MCF 10A (cell line): ENCODE measurements at regions of chr16 and their contacts with region 1.

Region 1: DNA sequence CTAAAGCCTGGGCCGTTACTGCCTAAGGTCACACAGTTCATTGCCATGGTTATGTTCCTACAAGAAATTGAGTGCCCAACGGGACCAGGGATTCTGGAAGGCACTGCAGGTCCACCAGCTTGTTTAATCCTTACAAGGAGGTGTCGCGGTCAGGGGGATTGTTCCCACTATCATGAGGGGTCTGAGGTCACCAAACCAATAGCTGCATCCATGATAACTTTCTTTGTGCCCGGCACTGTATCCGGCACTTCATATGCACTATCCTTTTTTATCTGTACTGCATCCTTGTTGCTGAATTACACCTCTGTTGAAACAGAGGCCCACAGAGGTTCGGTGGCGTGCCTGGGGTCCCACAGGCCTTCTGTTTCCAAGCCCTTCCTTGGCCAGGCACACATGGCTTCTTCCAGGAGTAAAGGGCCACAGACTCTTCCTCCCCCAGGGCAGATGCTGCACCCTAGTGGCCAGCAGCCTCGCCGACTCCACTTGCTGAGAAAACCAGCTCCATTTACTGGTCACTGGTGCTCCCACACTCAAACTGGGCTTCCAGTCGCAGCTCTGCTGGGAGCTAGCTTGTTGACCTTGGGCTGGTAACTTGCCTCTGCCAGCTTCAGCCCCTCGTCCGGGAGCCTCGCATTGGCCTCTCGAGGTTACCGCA is 82.0 kb upstream of the PLCG2 start:
- DNase-seq: peak; percentile 52
- H3K4me3 Mint-ChIP-seq: no peak overlapping the region
- H3K27ac Mint-ChIP-seq: no peak overlapping the region
- H3K4me1 Mint-ChIP-seq: no peaks in the 10 kb centered on the region
- H3K27me3 Mint-ChIP-seq: no peaks in the 10 kb centered on the region
- CTCF ChIP-seq: peak; percentile 84

Region 2: GRCh38 chr16:81585785-81586184 is 111.3 kb before region 1 on chr16:
- CTCF ChIA-PET with region 1: no interaction called
- POLR2A ChIA-PET with region 1: no interaction called
- intact Hi-C with region 1: no loop called
- DNase-seq: peak; percentile 39
- H3K4me3 Mint-ChIP-seq: no peak overlapping the region
- H3K27ac Mint-ChIP-seq: peak overlapping the region; percentile 77
- H3K4me1 Mint-ChIP-seq: peaks cover 56% of the 10 kb centered on the region
- H3K27me3 Mint-ChIP-seq: no peaks in the 10 kb centered on the region
- CTCF ChIP-seq: no peak

Region 3: GRCh38 chr16:81623363-81624102 is 73.6 kb before region 1 on chr16:
- CTCF ChIA-PET with region 1: interaction called, 7 read pairs
- POLR2A ChIA-PET with region 1: no interaction called
- intact Hi-C with region 1: loop called (anchors 5 kb)
- DNase-seq: peak; percentile 73
- H3K4me3 Mint-ChIP-seq: no peak overlapping the region
- H3K27ac Mint-ChIP-seq: no peak overlapping the region
- H3K4me1 Mint-ChIP-seq: peaks cover 9% of the 10 kb centered on the region
- H3K27me3 Mint-ChIP-seq: no peaks in the 10 kb centered on the region
- CTCF ChIP-seq: peak; percentile 64

Region 4: DNA sequence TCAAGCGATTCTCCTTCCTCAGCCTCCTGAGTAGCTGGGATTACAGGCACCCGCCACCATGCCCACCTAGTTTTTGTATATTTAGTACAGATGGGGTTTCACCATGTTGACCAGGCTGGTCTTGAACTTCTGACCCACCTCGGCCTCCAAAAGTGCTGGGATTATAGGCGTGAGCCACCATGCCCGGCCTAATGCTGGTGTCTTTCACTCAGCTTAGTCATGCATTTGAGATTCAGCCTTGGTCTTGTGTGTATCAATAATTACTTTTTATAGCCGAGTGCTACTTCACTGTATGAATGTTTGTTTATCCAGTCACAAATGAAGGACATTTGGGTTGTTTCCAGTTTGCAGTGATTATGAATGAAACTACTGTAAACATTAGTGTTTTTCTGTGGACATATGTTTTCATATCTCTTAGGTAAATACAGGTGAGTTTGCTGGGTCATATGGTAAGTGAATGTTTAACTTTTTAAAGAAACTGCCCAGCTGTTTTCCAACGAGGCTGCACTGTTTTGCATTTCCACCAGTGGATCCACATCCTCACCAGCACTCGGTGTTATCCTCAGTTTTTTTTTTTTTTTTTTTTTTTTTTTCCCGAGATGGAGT is 71.0 kb after region 1 on chr16:
- CTCF ChIA-PET with region 1: no interaction called
- POLR2A ChIA-PET with region 1: no interaction called
- intact Hi-C with region 1: no loop called
- DNase-seq: no peak
- H3K4me3 Mint-ChIP-seq: no peak overlapping the region
- H3K27ac Mint-ChIP-seq: no peak overlapping the region
- H3K4me1 Mint-ChIP-seq: no peaks in the 10 kb centered on the region
- H3K27me3 Mint-ChIP-seq: no peaks in the 10 kb centered on the region
- CTCF ChIP-seq: no peak

Region 5: GRCh38 chr16:81786321-81786720 is 89.2 kb after region 1 on chr16:
- CTCF ChIA-PET with region 1: no interaction called
- POLR2A ChIA-PET with region 1: no interaction called
- intact Hi-C with region 1: no loop called
- DNase-seq: no peak
- H3K4me3 Mint-ChIP-seq: no peak overlapping the region
- H3K27ac Mint-ChIP-seq: no peak overlapping the region
- H3K4me1 Mint-ChIP-seq: no peaks in the 10 kb centered on the region
- H3K27me3 Mint-ChIP-seq: peaks cover 3% of the 10 kb centered on the region
- CTCF ChIP-seq: no peak

Region 6: DNA sequence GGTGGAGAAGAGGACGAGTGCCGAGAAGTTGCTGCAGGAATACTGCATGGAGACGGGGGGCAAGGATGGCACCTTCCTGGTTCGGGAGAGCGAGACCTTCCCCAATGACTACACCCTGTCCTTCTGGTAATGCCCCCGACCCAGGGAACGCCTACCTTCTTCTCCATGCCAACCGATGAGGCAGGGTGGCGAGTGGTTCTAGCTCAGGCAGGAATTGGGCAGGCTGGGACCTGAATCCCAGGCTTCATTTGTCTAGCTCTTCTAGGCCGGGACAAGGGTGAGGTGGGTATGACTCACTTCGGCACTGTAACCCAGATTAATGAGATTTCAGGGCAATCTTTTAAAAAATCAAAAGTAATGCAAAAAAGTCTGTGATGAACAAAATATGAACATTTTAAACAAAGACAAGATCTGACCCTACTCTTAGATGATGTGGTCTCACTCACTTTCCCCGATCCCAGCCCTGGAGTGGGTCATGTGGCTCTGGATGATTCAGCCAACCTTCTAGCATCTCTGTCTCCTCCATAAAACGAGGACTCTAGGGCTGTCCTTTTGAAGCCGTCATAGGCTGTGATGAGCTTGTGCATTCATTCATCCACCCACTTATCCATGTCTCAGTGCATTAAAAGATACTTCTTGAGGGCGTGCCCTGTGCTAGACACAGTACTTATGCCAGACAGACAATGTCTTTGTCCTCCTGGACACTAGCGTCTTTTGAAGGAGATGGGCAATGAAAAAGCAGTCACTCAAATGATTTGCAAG is 211.6 kb after region 1 on chr16:
- CTCF ChIA-PET with region 1: no interaction called
- POLR2A ChIA-PET with region 1: no interaction called
- intact Hi-C with region 1: no loop called
- DNase-seq: peak; percentile 85
- H3K4me3 Mint-ChIP-seq: peak overlapping the region; percentile 10
- H3K27ac Mint-ChIP-seq: peak overlapping the region; percentile 52
- H3K4me1 Mint-ChIP-seq: peaks cover 11% of the 10 kb centered on the region
- H3K27me3 Mint-ChIP-seq: no peaks in the 10 kb centered on the region
- CTCF ChIP-seq: no peak